Sigmoid colon (tissue), 7 donors: ENCODE measurements at regions of chr6 and their contacts with region 1.

Region 1: GRCh38 chr6:157021344-157021992 is 244.3 kb downstream of the ARID1B start:
- DNase-seq: peak; percentile 97
- H3K4me3 ChIP-seq: peak overlapping the region; percentile 68 to 89 (median 76)
- H3K27ac ChIP-seq: peak overlapping the region; percentile 97 to 100 (median 100)
- H3K4me1 ChIP-seq: peaks cover 0 to 55% (median 41%) of the 10 kb centered on the region in 4 donors
- H3K27me3 ChIP-seq: no peaks in the 10 kb centered on the region
- CTCF ChIP-seq: peak in 2 of 4 experiments; percentile 38 to 48
- EP300 ChIP-seq: no peak
- POLR2A ChIP-seq: peak; percentile 82 to 92

Region 2: DNA sequence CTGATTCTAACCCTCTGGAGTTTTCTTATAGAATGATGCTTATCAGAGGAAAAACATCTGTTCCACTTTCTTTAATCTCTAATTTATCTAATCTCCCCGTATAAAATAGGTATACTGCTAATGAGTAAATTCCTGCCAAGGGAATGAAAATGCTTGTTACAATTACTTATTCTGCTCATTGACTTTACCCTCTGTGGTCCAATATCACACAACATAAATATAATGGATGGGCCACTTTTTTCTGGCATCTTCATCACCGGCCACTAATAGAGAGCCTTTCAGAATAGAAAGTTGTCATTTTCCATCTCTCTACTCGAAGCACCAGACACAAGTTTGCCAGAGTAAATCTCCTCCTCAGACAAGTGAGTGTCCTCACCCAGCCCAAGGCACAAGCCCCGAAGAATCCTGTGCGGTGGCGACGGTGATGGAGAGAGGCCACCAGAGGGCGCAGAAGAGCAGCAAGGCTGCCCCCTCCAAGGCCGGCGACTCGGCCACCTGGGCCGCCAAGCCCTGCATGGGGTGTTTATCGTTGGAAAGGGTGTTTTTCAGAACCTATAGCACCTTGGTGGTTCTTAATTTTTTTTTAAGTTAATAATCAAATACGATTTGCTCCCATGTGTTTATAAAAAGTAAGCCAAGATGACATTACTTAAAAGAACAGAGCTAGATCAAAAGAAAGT is 457.2 kb before region 1 on chr6:
- intact Hi-C with region 1: loop called (anchors 2 kb)
- DNase-seq: peak; percentile 90
- H3K4me3 ChIP-seq: no peak overlapping the region
- H3K27ac ChIP-seq: peak overlapping the region in 2 of 4 donors; percentile 18 to 27
- H3K4me1 ChIP-seq: peaks cover 0 to 15% (median 6%) of the 10 kb centered on the region in 4 donors
- H3K27me3 ChIP-seq: no peaks in the 10 kb centered on the region
- CTCF ChIP-seq: peak; percentile 80 to 93 (median 90)
- EP300 ChIP-seq: no peak
- POLR2A ChIP-seq: no peak

Region 3: DNA sequence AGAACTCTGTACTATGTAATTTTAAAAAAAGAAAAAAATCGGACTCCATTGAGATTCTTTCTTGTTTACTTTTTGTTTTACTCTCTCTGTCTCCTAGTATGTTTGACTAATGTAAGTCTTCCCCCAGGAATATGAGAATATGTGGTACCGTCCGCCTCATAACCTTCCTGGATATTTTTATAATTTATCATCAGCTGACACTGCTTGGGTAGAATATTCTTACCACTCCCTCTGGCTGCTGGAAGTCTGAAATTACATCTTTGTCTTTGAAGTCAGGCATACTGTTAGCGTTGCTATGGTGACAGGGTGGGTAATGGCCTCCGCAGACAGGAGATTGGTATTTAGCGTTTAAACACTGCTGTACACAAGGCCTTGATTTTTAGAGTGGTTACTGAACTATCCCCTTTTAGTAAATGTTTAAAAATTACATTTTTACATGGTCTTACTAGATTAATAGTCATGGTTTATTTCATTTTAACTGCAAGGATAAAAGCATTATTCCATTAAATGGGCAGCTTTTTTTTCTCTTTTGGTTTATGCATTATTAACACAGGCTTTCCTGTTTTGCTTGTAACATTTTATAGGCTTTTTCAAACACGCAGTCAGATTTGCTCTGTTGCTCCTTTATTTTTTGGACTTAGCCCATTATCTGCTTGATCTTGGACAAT is 67.9 kb before region 1 on chr6:
- intact Hi-C with region 1: loop called (anchors 5 kb)
- DNase-seq: no peak
- H3K4me3 ChIP-seq: no peak overlapping the region
- H3K27ac ChIP-seq: peak overlapping the region; percentile 34 to 73 (median 54)
- H3K4me1 ChIP-seq: peaks cover 0 to 82% (median 76%) of the 10 kb centered on the region in 4 donors
- H3K27me3 ChIP-seq: no peaks in the 10 kb centered on the region
- CTCF ChIP-seq: peak in 3 of 4 experiments; percentile 29 to 33 (median 31)
- EP300 ChIP-seq: no peak
- POLR2A ChIP-seq: no peak

Region 4: GRCh38 chr6:156976216-156977127 is 45.0 kb before region 1 on chr6:
- intact Hi-C with region 1: loop called (anchors 5 kb)
- DNase-seq: peak; percentile 63
- H3K4me3 ChIP-seq: peak overlapping the region; percentile 26 to 47 (median 37)
- H3K27ac ChIP-seq: peak overlapping the region in 3 of 4 donors; percentile 24 to 65 (median 51)
- H3K4me1 ChIP-seq: peaks cover 0 to 62% (median 47%) of the 10 kb centered on the region in 4 donors
- H3K27me3 ChIP-seq: no peaks in the 10 kb centered on the region
- CTCF ChIP-seq: no peak
- EP300 ChIP-seq: no peak
- POLR2A ChIP-seq: no peak

Region 5: GRCh38 chr6:157099912-157100593 is 78.6 kb after region 1 on chr6:
- intact Hi-C with region 1: no loop called
- DNase-seq: no peak
- H3K4me3 ChIP-seq: no peak overlapping the region
- H3K27ac ChIP-seq: no peak overlapping the region
- H3K4me1 ChIP-seq: peaks cover 0 to 9% (median 0%) of the 10 kb centered on the region in 4 donors
- H3K27me3 ChIP-seq: no peaks in the 10 kb centered on the region
- CTCF ChIP-seq: no peak
- EP300 ChIP-seq: no peak
- POLR2A ChIP-seq: no peak